SK-N-SH (cell line): ENCODE measurements at regions of chr7 and their contacts with region 1.

Region 1: DNA sequence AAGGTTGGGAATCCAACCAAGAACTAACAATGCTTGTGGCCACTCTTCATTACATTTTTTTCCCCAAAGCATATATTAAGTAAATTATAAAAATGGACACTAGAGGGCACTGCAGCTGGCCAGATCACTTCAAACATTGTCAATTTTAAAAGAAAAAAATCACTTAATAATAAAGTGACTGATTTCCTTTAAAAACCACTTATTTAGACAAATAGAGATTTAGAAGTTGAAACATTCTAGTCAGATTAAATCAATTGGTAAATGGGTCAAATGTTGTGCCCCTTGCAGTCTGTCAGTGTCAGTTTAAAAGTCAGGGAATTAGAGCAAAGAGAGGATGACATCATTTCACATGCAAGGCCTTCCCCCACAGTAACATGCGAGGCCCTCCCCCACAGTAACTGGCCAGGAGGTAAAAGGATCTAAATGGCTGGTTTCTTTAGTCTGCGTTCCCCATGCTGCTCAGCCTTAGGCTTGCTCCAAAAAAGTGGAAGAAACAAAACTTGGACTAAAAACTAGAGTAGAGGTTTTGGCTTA is 177.9 kb downstream of the SKAP2 start:
- DNase-seq: peak; percentile 17
- H3K4me3 ChIP-seq: no peak overlapping the region; a peak in 1 of 4 replicates
- H3K27ac ChIP-seq: no peak overlapping the region
- H3K4me1 ChIP-seq: peaks cover 0 to 5% of the 10 kb centered on the region in 2 experiments; a peak in 2 of 4 replicates
- H3K27me3 ChIP-seq: peaks cover 9% of the 10 kb centered on the region
- CTCF ChIP-seq: peak; percentile 98
- EP300 ChIP-seq: no peak
- RAD21 ChIP-seq: peak; percentile 83

Region 2: DNA sequence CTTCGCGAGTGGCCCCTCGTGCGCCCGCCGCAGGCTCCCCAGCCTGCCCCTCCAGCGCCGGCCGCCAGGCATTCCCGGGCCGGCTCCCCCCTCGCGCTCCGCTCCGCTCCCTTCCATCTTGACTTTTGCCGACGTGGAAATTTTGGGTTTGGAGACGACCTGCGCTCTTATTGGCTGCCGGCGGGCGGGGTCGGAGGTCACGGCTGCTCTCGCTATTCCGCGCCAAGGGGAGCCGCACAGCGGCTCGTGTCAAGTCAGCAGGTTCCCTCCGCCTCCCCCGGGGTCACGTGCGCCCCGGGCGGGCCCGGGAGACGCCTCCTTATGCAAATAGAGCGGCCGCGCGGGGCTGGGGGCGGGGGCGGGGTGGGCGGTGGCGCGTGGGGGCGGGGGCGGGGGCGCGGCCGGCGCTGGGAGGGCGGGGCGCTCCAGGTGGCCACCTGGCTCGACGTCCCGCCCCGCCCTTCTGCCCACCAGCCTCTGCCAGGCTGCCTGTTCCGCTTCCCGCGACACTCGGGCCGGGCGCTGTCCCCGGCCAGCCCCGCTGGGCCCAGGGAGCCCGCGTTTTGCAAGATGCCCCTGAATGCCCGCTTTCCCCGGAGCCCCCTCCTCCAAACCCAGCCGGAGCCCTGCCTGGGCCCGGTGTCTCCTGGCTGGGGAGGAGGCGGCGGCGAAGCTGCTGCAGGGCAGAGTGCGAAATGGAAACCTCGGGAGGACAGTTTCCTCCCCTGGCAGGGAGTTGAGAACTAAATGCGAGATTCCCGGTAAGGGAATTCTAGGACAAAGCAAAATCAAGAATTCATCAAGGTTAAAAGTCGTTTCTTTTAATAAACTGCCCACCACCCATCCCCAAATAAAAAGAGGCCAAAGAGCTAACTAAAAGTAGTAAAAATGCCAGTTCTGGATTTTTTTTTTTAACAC is 735.2 kb before region 1 on chr7:
- CTCF ChIA-PET with region 1: no interaction called
- POLR2A ChIA-PET with region 1: no interaction called
- DNase-seq: peak; percentile 97
- H3K4me3 ChIP-seq: peak overlapping the region; percentile 39 to 58; a peak in 3 of 4 replicates
- H3K27ac ChIP-seq: no peak overlapping the region
- H3K4me1 ChIP-seq: peaks cover 0 to 11% of the 10 kb centered on the region in 2 experiments; a peak in 1 of 4 replicates
- H3K27me3 ChIP-seq: peaks cover 40% of the 10 kb centered on the region
- CTCF ChIP-seq: no peak
- EP300 ChIP-seq: no peak
- RAD21 ChIP-seq: no peak

Region 3: DNA sequence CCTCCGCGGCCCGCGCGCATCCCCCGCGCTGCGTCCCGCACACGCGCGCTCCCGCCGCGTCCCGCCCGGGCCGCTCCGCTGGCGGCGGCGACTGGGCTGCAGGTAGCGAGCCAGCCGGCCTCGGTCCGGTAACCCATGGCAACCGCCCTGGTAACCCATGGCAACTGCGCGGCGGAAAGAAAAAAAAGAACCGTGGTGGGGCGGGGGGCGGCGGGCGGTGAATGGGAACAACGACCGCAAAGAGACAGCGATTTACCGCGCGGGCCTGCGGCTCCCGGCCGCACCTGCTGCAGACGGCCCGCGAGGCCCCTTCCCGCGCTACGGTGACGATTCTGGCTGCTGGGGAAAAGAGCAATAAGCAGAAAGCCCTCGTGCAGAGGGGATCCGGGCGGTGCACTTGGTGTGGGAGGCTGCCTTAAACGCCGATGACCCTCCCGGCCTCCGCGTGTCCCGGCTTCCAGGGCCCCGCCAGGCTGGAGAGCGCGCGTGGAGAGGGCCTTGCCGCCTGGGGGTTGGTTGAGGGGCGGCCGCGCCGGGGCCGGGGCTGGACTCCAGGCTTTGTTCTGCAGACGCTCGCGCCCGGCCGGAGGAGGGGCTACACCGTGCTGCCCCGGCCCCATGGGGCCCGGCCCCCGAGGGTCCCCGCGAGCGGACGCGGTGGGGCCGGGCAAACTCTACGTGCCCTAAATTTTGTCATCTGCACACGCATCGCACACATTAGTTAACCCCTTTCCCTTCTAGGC is 310.2 kb before region 1 on chr7:
- CTCF ChIA-PET with region 1: interaction called, 17 read pairs
- POLR2A ChIA-PET with region 1: no interaction called
- DNase-seq: peak; percentile 94
- H3K4me3 ChIP-seq: peak overlapping the region in 1 of 2 experiments; percentile 55; a peak in 2 of 4 replicates
- H3K27ac ChIP-seq: peak overlapping the region in 1 of 2 experiments; percentile 89; a peak in 2 of 4 replicates
- H3K4me1 ChIP-seq: peaks cover 0 to 5% of the 10 kb centered on the region in 2 experiments; a peak in 2 of 4 replicates
- H3K27me3 ChIP-seq: peaks cover 38% of the 10 kb centered on the region
- CTCF ChIP-seq: no peak
- EP300 ChIP-seq: no peak
- RAD21 ChIP-seq: no peak

Region 4: DNA sequence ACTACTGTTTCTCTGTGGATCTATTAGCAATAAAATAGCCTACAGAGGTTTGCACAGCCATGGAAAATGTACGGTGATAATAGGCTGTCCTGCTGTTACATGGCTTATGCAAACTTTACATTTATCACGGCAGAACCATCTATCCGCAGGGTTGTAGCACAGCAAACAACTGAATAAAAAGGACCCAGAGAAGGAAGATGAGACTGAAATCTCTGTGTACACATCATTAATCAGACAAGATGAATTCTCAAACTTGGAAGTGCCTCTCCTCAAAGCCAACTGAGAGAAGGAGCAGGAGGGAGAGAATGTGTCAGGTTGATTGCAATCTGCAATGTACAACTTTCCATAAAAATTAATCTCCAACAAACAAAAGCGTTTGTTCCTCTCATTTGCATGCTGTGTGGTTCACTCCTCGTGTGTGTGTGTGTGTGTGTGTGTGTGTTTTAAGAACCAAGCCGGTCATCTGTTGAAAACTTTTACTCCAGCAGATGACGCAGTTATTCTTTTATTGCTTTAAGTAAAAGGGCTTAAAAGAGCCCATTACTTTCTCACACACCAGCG is 101.4 kb before region 1 on chr7:
- CTCF ChIA-PET with region 1: no interaction called
- POLR2A ChIA-PET with region 1: no interaction called
- DNase-seq: no peak
- H3K4me3 ChIP-seq: no peak overlapping the region
- H3K27ac ChIP-seq: no peak overlapping the region
- H3K4me1 ChIP-seq: no peaks in the 10 kb centered on the region
- H3K27me3 ChIP-seq: no peaks in the 10 kb centered on the region
- CTCF ChIP-seq: no peak
- EP300 ChIP-seq: no peak
- RAD21 ChIP-seq: no peak

Region 5: DNA sequence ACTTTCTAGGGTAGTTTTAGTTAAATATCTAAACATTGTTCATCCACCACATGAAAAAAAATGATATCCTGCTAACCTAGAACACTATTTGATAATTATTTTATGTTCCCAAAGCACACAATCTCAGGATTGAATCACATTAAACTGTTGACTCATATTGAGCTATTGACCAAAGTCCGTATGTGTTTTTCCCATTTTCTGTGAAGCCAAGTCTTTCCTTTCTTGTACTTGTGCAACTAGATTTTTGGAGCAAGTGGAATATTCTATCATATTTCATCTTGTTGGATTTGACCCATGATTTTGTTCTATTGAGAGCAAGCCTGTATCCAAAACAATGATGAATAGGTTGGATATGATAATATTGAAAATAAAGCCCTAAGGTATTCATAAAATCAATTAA is 13.3 kb after region 1 on chr7:
- CTCF ChIA-PET with region 1: interaction called, 77 read pairs
- POLR2A ChIA-PET with region 1: no interaction called
- DNase-seq: no peak
- H3K4me3 ChIP-seq: no peak overlapping the region
- H3K27ac ChIP-seq: no peak overlapping the region
- H3K4me1 ChIP-seq: peaks cover 0 to 4% of the 10 kb centered on the region in 2 experiments; a peak in 2 of 4 replicates
- H3K27me3 ChIP-seq: peaks cover 4% of the 10 kb centered on the region; the same call in 1 of the 2 replicates
- CTCF ChIP-seq: no peak
- EP300 ChIP-seq: no peak
- RAD21 ChIP-seq: no peak

Region 6: DNA sequence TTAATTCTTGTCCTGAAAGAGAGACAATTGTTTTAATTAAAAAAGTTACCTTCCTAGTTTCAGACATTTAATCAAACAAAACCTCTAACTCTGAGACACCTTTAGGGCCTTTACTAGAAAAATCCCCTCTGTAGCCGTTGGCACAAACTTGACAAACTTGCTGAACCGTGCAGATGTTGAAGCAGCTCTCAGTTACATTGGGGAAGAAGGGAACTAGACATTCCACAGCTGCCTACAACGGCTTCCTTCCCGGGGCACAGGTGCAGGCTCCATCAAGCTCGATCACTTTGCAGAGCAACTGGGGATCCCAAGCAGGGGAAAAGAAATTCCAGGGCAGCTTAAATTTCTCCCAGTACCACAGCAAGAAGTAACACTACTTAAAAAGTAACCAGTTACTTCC is 36.6 kb after region 1 on chr7:
- CTCF ChIA-PET with region 1: interaction called, 15 read pairs
- POLR2A ChIA-PET with region 1: no interaction called
- DNase-seq: no peak
- H3K4me3 ChIP-seq: no peak overlapping the region
- H3K27ac ChIP-seq: no peak overlapping the region
- H3K4me1 ChIP-seq: no peaks in the 10 kb centered on the region
- H3K27me3 ChIP-seq: no peaks in the 10 kb centered on the region
- CTCF ChIP-seq: no peak
- EP300 ChIP-seq: no peak
- RAD21 ChIP-seq: no peak

Region 7: DNA sequence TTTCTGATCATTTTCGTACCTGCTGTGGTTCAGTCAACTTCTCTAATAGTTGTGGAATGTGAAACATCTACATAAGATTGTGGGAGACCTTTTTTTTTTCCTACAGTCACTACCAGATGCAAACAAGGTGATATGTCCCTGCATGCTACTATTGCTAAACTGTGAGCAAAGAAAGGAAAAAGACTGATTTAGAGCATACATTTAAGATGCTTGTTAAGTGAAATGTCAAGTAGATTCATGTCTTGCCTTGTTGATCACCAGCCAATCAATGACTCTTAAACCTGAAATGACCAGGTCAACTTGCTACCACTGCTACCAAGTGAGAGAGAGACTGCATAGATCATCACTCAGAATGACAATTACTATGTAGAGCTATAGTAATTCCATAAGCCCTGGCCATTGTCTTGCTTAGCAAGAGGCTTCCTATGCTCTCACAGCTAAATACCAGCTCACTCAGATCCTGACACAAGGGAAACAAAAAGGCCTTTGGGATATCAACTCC is 262.2 kb after region 1 on chr7:
- CTCF ChIA-PET with region 1: no interaction called
- POLR2A ChIA-PET with region 1: no interaction called
- DNase-seq: no peak
- H3K4me3 ChIP-seq: no peak overlapping the region
- H3K27ac ChIP-seq: no peak overlapping the region
- H3K4me1 ChIP-seq: no peaks in the 10 kb centered on the region
- H3K27me3 ChIP-seq: peaks cover 5% of the 10 kb centered on the region; the same call in 1 of the 2 replicates
- CTCF ChIP-seq: no peak
- EP300 ChIP-seq: no peak
- RAD21 ChIP-seq: no peak

Region 8: DNA sequence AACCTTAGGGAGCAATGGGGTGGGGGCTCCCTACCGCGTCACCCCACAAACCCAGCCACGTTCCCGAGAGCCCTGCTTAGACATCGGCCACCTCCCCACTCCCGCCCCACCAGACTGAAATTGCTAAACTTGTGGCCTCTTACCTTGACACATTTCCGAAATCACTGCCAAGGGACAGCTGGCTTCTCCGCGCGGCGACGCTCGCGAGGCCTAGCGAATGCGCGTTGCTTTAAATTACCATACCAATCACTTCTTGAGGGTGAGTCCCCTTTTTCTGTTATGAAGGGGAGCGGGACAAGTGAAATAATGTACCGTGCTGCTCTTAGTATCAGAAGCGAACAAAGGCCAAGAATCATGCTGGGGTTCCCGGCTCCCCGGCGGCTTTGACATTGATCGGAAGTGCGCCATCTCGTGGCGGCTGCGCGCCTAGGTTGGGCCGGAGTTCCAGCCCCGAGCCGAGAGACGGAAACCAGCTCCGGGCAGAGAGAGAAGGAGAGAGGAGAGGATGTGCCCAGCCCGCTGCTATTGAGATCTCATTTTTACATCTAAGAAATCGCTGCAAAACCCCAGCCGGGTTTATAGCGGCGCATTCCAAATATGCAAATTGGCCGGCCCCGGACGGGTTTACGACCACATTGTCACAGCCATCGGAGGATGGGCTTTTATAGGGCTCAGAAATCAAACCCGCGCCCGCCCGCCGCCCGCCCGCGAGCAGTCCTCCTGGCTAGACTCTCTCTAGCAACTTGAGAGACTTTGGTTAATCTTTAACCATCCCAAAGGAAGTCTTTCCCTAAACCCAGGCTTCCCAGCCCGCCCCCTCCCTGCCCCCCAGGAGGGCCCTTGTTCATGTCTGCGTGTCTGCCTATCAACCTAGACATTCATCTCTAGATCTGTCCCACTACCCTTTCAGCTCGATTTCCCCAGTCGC is 493.3 kb after region 1 on chr7:
- CTCF ChIA-PET with region 1: interaction called, 19 read pairs
- POLR2A ChIA-PET with region 1: no interaction called
- DNase-seq: peak; percentile 93
- H3K4me3 ChIP-seq: peak overlapping the region; percentile 5 to 36; a peak in 2 of 4 replicates
- H3K27ac ChIP-seq: no peak overlapping the region
- H3K4me1 ChIP-seq: peaks cover 4 to 10% of the 10 kb centered on the region in 2 experiments; a peak in 1 of 4 replicates
- H3K27me3 ChIP-seq: peaks cover 97% of the 10 kb centered on the region
- CTCF ChIP-seq: peak; percentile 100
- EP300 ChIP-seq: no peak
- RAD21 ChIP-seq: no peak